Heart left ventricle (tissue), 16 donors: ENCODE measurements at regions of chr4 and their contacts with region 1.

Region 1: DNA sequence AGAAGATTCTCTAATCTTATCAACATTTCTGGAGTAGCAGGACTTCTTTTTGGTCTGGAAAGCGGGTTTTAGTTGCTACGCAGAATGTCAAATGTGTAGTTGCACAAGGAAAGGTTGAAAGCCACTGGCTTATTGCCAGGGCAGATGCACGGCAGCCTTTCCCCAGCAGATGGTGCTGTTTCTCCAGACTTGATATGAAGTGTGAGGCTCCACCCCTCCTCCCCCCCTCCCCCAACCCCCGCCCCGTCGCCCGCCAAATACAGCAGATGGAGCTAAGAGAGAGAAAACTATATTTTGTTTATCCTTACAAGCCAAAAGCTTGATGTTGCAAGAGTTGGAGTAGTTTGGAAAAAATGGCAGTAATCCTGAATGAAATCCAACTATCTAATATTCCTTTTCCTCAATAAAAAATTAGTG is 32.0 kb downstream of the ENOPH1 start:
- DNase-seq: peak; percentile 76 to 85 (median 80)
- ATAC-seq: peak; percentile 57 to 90 (median 86)
- H3K4me3 ChIP-seq: no peak overlapping the region
- H3K27ac ChIP-seq: peak overlapping the region in 1 of 12 donors; percentile 10
- H3K4me1 ChIP-seq: peaks cover 0 to 9% (median 1%) of the 10 kb centered on the region in 12 donors
- H3K27me3 ChIP-seq: no peaks in the 10 kb centered on the region
- CTCF ChIP-seq: peak; percentile 72 to 97 (median 89)
- POLR2A ChIP-seq: no peak

Region 2: DNA sequence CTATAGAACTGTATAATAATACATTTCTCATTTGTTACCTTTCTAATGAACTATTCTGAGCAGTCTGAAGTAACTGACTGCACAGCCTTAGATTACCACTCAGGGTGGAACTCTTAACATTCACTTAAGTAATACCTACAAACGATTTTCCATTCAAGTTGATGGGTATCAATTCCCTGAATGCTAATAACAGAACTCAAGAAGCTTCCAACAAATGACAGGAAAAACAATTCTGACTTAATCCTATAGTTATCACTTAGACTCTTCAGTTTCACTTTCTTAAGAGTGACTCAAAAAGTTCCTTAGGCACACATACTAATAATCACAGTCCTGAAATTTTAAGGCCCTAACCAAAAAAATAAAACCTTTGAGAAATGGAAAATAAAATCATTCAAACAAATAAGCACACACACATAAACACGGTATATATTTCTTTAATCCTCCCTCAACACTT is 109.5 kb before region 1 on chr4:
- intact Hi-C with region 1: no loop called
- DNase-seq: no peak
- ATAC-seq: no peak
- H3K4me3 ChIP-seq: no peak overlapping the region
- H3K27ac ChIP-seq: peak overlapping the region in 1 of 12 donors; percentile 40
- H3K4me1 ChIP-seq: peaks cover 0 to 27% (median 4%) of the 10 kb centered on the region in 12 donors
- H3K27me3 ChIP-seq: no peaks in the 10 kb centered on the region
- CTCF ChIP-seq: no peak
- POLR2A ChIP-seq: no peak

Region 3: GRCh38 chr4:82739316-82740179 is 277.1 kb after region 1 on chr4:
- intact Hi-C with region 1: loop called (anchors 1 to 5 kb)
- DNase-seq: peak; percentile 44 to 81 (median 54)
- ATAC-seq: peak; percentile 86 to 96 (median 94)
- H3K4me3 ChIP-seq: no peak overlapping the region
- H3K27ac ChIP-seq: no peak overlapping the region
- H3K4me1 ChIP-seq: no peaks in the 10 kb centered on the region
- H3K27me3 ChIP-seq: no peaks in the 10 kb centered on the region
- CTCF ChIP-seq: peak; percentile 82 to 98 (median 89)
- POLR2A ChIP-seq: no peak

Region 4: DNA sequence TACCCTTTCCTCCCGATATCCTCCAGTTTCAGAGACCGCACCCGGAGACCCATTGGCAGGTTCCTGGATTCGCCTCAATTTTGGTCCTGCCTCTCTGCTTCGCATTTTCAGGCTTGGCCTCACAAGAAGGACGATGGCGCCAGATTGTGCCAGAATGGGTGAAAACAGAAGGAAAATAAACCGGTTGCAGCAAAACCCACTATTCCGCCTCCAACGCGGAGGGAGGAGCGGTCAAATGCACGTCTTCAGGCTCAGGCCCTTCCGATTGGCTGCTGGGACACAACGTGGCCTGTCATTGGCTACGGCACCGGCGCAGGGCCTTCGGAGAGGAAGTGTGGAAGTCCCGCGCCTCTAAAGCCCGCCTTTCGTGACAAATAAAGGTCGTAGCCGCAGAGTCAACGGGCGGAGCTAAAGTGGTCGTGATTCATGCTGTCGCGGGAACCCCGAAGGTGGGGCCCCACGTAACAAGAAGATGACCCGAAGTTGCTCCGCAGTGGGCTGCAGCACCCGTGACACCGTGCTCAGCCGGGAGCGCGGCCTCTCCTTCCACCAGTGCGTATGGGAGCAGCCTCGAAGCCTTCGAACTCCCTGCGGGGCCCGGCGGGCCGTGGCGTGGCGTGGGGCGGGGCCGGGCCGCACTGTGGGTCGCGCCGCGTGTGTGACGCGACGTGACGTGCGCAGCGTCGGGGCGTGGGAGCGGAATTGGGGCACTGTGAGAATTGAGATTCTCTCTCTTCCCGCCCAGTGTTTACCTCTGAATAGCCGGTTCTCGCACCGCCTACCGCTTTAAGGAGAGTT is 438.1 kb after region 1 on chr4 and contains the start of gene THAP9:
- intact Hi-C with region 1: loop called in 1 of 10 experiments (anchors 5 kb)
- DNase-seq: peak; percentile 98 to 99 (median 99)
- ATAC-seq: peak; percentile 97 to 99 (median 99)
- H3K4me3 ChIP-seq: peak within 1 kb of the TSS; percentile 42 to 85 (median 74)
- H3K27ac ChIP-seq: peak within 1 kb of the TSS; percentile 96 to 100 (median 99)
- H3K4me1 ChIP-seq: peaks cover 0 to 46% (median 33%) of the 10 kb centered on the region in 12 donors
- H3K27me3 ChIP-seq: no peaks in the 10 kb centered on the region
- CTCF ChIP-seq: no peak
- POLR2A ChIP-seq: peak in 1 of 2 donors; percentile 65
- total RNA-seq, gene THAP9: 3.1 to 7.7 (median 5.4) TPM

Region 5: GRCh38 chr4:82948647-82949204 is 486.3 kb after region 1 on chr4:
- intact Hi-C with region 1: no loop called
- DNase-seq: no peak
- ATAC-seq: no peak
- H3K4me3 ChIP-seq: no peak overlapping the region
- H3K27ac ChIP-seq: no peak overlapping the region
- H3K4me1 ChIP-seq: peaks cover 0 to 9% (median 0%) of the 10 kb centered on the region in 12 donors
- H3K27me3 ChIP-seq: no peaks in the 10 kb centered on the region
- CTCF ChIP-seq: no peak
- POLR2A ChIP-seq: no peak

Region 6: DNA sequence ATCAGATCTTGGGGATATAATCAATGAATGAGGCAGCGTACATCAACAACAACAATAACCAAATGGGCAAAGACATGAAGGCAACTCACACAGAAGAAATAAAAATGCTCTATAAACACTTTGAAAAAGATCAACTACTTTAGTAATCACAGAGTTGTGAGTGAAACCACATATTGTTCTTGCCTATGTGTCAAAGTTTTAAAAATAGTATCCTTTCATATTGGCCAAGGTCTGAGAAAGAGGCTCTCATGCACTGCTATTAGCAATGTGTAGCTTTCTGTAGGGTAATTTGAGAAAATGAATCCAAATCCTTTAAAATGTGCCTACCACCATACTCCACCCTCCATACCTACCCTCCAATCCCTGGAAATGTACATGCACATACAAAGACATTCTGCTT is 797.2 kb after region 1 on chr4:
- intact Hi-C with region 1: loop called in 8 of 10 experiments (anchors 2 to 10 kb)
- DNase-seq: no peak
- ATAC-seq: peak; percentile 56 to 69 (median 62)
- H3K4me3 ChIP-seq: no peak overlapping the region
- H3K27ac ChIP-seq: no peak overlapping the region
- H3K4me1 ChIP-seq: peaks cover 0 to 28% (median 3%) of the 10 kb centered on the region in 12 donors
- H3K27me3 ChIP-seq: no peaks in the 10 kb centered on the region
- CTCF ChIP-seq: no peak
- POLR2A ChIP-seq: no peak